Transverse colon (tissue), 4 donors: ENCODE measurements at regions of chr11 and their contacts with region 1.

Region 1: DNA sequence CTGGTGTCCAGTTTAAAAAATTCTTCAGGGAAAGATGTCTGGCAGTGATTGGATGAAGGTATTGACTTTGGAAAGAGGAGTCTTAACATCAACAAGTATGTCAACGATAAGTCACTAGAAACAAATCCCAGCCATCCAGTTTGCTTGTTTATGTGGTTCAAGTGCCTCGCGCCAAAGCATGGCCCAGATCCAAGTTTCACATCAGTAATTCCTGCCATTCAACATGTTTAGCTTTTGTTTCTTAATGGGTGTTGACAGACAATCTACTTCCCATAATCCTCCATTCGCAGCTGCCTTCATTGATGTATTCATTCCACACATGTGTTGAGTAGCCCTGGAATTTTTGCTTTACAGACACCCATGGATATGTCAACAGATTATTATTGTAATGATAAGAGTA is 77.8 kb downstream of the UBASH3B start:
- DNase-seq: no peak
- H3K4me3 ChIP-seq: no peak overlapping the region
- H3K27ac ChIP-seq: no peak overlapping the region
- H3K4me1 ChIP-seq: peaks cover 0 to 17% (median 3%) of the 10 kb centered on the region in 4 donors
- H3K27me3 ChIP-seq: no peaks in the 10 kb centered on the region
- CTCF ChIP-seq: no peak
- EP300 ChIP-seq: no peak
- POLR2A ChIP-seq: no peak

Region 2: GRCh38 chr11:122709039-122709760 is 24.1 kb before region 1 on chr11:
- in situ Hi-C with region 1: no loop called
- intact Hi-C with region 1: no loop called
- DNase-seq: no peak
- H3K4me3 ChIP-seq: no peak overlapping the region
- H3K27ac ChIP-seq: no peak overlapping the region
- H3K4me1 ChIP-seq: peaks cover 0 to 9% (median 1%) of the 10 kb centered on the region in 4 donors
- H3K27me3 ChIP-seq: no peaks in the 10 kb centered on the region
- CTCF ChIP-seq: no peak
- EP300 ChIP-seq: no peak
- POLR2A ChIP-seq: no peak

Region 3: DNA sequence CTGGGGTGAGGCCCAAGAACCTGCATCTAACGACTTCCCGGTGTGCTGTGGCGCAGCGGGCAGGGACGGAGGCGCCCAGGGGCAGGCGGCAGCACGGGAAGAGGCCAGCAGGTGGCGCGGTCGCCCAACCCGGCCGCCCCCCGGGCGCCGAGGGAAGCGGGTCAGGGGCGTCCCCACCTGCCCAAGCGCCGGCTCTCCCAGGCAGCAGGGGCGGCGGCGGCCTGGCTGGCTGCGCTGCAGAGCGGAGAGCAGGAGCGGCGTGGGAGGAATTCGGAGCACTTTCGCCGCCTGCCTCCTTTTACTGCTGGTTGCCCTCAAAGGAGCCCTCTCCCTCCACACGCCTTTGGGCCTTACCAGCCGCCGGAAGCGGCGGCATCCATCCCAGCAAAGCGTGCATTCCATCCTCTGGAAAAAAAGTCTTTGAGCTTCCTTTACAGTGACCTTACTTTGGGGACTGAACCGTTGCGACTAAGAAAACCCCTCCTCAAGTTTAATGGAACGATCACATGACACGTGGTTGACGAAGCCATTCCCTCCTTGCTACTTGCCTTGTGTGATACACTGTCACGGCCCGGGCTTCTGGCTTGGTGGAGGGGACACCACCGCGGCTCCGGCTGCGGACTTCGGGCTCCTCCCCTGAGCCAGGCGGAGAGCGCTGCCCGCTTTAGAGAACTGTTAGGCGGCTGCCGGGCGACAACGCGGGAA is 568.5 kb after region 1 on chr11:
- in situ Hi-C with region 1: no loop called
- intact Hi-C with region 1: loop called (anchors 5 kb)
- DNase-seq: peak; percentile 63
- H3K4me3 ChIP-seq: peak overlapping the region; percentile 20 to 54 (median 36)
- H3K27ac ChIP-seq: no peak overlapping the region
- H3K4me1 ChIP-seq: peaks cover 8 to 13% (median 10%) of the 10 kb centered on the region in 4 donors
- H3K27me3 ChIP-seq: peaks cover 28% of the 10 kb centered on the region
- CTCF ChIP-seq: peak; percentile 36 to 91 (median 84)
- EP300 ChIP-seq: no peak
- POLR2A ChIP-seq: no peak